Prostate gland (tissue), 2 donors: ENCODE measurements at regions of chr18 and their contacts with region 1.

Region 1: GRCh38 chr18:69617888-69618287 is 217.2 kb downstream of the DOK6 start:
- DNase-seq: no peak
- H3K4me3 ChIP-seq: no peak overlapping the region
- H3K27ac ChIP-seq: no peak overlapping the region
- H3K4me1 ChIP-seq: no peaks in the 10 kb centered on the region
- H3K27me3 ChIP-seq: no peaks in the 10 kb centered on the region
- CTCF ChIP-seq: no peak
- POLR2A ChIP-seq: no peak

Region 2: DNA sequence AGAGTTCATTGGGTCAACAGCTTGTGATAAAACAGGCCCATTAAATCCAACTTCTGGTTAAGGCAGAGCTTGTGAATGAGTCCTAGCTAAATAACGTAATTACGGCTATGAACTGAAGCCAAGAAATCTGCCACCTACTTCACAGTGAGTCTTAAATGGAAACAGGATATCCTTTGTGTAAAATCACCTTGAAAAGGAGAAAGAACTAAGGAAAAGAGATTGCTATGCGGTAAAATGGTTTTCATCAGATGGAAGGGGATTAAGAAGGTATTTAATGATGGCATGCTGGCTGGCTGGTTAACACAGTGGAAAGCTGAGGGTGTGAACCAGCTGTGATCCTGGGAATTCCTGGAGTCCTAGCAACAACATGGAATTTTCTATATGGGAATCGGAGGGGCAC is 60.6 kb before region 1 on chr18:
- intact Hi-C with region 1: loop called (anchors 10 kb)
- DNase-seq: no peak
- H3K4me3 ChIP-seq: no peak overlapping the region
- H3K27ac ChIP-seq: no peak overlapping the region
- H3K4me1 ChIP-seq: no peaks in the 10 kb centered on the region
- H3K27me3 ChIP-seq: no peaks in the 10 kb centered on the region
- CTCF ChIP-seq: no peak
- POLR2A ChIP-seq: no peak

Region 3: GRCh38 chr18:69689121-69689759 is 71.4 kb after region 1 on chr18:
- intact Hi-C with region 1: no loop called
- DNase-seq: no peak
- H3K4me3 ChIP-seq: no peak overlapping the region
- H3K27ac ChIP-seq: no peak overlapping the region
- H3K4me1 ChIP-seq: no peaks in the 10 kb centered on the region
- H3K27me3 ChIP-seq: no peaks in the 10 kb centered on the region
- CTCF ChIP-seq: no peak
- POLR2A ChIP-seq: no peak

Region 4: DNA sequence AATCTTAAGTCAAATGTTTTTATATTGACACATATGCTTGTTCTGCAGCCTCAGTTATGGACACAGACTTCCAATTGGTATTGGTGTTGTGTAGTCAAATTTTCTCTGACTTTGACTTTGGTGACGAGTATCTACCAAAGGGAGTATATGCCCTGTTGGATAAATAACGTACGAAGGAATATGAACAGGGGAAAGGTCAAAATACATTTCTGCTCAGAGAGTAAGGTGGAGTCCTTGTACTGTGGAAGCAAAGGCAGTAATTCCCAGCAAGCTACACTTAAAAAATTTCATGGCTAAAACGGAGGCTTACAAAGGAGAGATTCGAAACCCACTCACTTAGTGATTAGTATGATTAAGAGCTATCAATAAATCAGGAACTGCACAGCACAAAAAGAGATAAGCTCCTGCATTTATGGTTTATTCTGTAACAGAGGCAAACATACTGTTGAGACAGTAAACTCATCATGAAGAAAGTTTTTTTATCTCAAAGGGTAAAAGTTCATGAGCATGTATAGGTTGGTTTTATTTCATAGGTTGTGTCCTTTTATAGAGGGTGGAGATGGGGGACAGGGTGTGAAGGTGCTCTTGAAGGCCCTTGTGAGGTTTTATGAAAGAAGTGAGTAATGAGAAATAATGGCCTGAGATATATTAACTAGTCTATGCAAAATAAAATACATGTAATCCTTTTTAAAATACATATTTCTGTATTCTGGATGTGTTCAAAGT is 187.1 kb after region 1 on chr18:
- intact Hi-C with region 1: no loop called
- DNase-seq: no peak
- H3K4me3 ChIP-seq: no peak overlapping the region
- H3K27ac ChIP-seq: no peak overlapping the region
- H3K4me1 ChIP-seq: no peaks in the 10 kb centered on the region
- H3K27me3 ChIP-seq: no peaks in the 10 kb centered on the region
- CTCF ChIP-seq: no peak
- POLR2A ChIP-seq: no peak

Region 5: DNA sequence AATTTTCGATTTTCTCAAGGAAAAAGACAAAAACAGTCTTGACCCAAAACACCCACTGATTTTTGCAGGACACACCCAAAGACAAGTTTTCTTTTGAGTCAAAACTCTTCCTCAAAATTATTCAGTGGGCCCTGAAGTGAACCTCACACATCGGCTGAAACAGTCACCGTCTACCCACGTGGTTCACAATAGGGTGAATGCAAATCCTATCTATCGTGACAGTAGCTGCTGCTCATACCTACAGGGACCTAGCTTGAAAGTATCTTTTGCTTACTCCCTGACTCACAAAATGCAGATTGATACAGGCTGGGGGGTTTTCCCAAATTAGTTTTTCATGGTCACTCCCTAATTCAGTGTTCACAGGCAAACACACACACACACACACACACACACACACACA is 340.5 kb after region 1 on chr18:
- intact Hi-C with region 1: no loop called
- DNase-seq: no peak
- H3K4me3 ChIP-seq: no peak overlapping the region
- H3K27ac ChIP-seq: no peak overlapping the region
- H3K4me1 ChIP-seq: no peaks in the 10 kb centered on the region
- H3K27me3 ChIP-seq: no peaks in the 10 kb centered on the region
- CTCF ChIP-seq: no peak
- POLR2A ChIP-seq: no peak